Activated CD4-positive, alpha-beta memory T cell treated with anti-CD3 and anti-CD28 coated beads for 36 hours (primary cell): ENCODE measurements at regions of chr14 and their contacts with region 1.

Region 1: GRCh38 chr14:49862089-49862673 is 9.6 kb upstream of the NEMF start:
- DNase-seq: peak; percentile 93
- H3K4me3 Mint-ChIP-seq: no peak overlapping the region
- H3K27ac Mint-ChIP-seq: no peak overlapping the region
- H3K4me1 Mint-ChIP-seq: peaks cover 24% of the 10 kb centered on the region
- H3K27me3 Mint-ChIP-seq: peaks cover 2% of the 10 kb centered on the region

Region 2: DNA sequence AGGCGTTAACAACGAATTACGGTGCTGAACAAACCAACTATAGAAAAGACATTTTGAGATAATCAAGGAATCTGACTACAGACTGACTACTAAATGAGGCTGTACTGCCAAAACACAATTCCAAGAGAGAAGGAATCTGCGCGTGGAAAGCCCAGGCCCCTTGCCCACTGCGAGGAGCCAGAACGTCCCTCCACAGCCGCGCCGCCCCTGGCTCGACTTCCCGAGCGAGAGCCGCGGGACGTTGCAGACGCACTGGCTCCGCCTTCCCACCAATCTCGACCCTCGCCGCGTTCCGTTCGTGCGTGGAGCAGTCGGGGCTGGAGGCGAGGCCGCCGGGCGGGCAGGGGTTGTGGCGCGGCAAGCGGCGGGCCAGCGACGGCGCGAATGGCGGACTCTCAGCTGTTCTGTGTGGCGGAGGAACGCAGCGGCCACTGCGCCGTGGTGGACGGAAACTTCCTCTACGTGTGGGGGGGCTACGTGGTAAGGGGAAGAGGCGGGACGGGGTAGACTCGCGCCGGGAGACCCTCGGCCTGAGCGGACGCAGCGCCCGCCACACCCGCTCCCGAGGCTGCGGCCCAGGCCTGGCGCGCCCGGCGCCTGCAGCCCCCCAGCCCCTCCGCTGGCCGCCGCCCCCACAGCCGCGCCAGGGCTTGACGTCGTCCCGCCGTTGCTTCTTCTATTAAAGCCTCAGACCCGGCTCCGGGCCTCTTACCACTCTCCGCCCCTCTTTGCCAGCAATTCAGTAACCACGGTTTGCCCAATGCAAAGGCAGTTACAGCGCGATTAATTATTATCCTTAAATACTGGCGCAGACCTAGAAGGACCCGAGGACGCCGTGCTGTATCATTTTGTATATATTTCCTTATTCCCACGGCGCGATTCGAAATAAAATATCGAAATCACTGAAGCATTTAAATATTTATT is 169.1 kb before region 1 on chr14 and contains the start of gene KLHDC1:
- CTCF ChIA-PET with region 1: no interaction called
- POLR2A ChIA-PET with region 1: no interaction called
- intact Hi-C with region 1: loop called (anchors 5 kb)
- DNase-seq: peak; percentile 86
- H3K4me3 Mint-ChIP-seq: peak within 1 kb of the TSS; percentile 77
- H3K27ac Mint-ChIP-seq: peak within 1 kb of the TSS; percentile 40
- H3K4me1 Mint-ChIP-seq: peaks cover 27% of the 10 kb centered on the region
- H3K27me3 Mint-ChIP-seq: no peaks in the 10 kb centered on the region
- total RNA-seq, gene KLHDC1: 1.4 to 1.9 TPM

Region 3: DNA sequence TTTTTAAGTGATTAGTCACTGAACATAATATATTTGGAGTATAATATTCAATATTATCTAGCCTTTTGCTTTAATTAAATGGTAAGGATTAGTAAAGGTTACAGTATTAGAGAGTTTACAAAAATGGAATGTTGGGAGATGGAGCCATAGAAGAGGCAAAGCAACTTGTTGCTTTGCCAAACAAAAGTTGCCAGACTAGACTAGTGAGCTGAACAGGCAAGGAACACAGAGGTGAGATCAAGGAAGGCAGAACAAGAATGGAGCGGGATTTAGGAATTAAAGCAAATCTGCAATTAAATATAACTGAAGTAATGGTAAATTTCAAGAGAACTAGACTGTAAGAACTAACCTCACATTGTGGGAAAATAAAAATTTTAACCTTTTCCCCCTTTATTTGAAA is 35.8 kb after region 1 on chr14:
- CTCF ChIA-PET with region 1: interaction called, 14 read pairs
- POLR2A ChIA-PET with region 1: interaction called, 55 read pairs
- intact Hi-C with region 1: loop called (anchors 1 kb)
- DNase-seq: no peak
- H3K4me3 Mint-ChIP-seq: peak overlapping the region; percentile 75
- H3K27ac Mint-ChIP-seq: peak overlapping the region; percentile 93
- H3K4me1 Mint-ChIP-seq: peaks cover 29% of the 10 kb centered on the region
- H3K27me3 Mint-ChIP-seq: no peaks in the 10 kb centered on the region

Region 4: DNA sequence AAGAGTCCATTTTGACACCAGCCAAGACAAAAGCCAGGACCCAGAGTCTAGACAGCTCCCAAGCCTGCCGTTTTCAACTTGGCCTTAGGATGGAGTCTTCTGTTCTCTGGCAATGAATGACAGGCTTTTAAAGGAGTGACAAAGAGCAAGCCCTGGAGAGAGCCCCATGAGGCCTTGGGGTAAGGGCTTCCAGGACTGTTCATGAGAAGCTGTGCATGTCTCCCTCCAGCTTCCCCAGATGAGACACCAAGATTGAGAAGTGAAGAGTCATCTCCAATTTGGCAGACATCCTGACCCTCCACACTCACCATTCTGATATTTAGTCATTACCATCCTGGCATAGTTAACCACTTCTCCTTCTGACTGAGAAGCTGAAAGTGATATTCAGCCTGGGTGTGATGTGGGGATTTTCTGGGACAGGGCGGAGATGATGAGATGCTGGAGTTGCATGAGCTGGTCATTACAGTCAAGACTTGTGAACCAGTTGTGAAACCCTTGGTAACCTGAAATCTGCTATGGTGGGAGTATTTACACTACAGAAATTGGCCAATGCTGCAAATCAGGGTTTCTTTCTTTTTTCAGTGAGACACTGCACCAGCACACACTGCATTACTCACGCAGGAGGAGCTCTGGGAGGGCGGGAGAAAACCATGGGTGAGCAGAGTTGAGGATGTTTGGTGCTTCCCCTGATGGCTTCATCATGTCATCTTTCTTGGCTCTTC is 176.4 kb after region 1 on chr14:
- CTCF ChIA-PET with region 1: interaction called, 28 read pairs
- POLR2A ChIA-PET with region 1: interaction called, 43 read pairs
- intact Hi-C with region 1: loop called (anchors 1 kb)
- DNase-seq: peak; percentile 90
- H3K4me3 Mint-ChIP-seq: peak overlapping the region; percentile 74
- H3K27ac Mint-ChIP-seq: peak overlapping the region; percentile 99
- H3K4me1 Mint-ChIP-seq: peaks cover 64% of the 10 kb centered on the region
- H3K27me3 Mint-ChIP-seq: no peaks in the 10 kb centered on the region

Region 5: DNA sequence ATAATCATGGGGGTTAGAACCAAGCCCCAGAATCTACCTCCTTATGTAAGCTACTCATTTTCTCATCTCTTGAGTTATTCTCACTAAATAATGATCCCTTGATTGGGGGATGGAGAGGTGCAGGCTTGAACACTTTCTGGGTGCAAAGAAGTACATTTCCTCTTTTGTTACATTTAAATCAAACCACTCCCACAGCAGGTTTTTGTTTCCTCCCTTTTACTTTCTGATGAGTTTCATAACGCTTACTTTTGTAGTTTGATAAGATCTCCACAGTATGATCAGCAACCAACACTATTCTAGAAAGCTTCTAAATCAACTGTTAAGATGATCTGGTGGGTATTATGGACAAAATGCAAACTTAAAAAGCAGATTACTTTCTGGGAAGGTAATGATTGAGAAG is 233.7 kb after region 1 on chr14:
- CTCF ChIA-PET with region 1: interaction called, 28 read pairs
- POLR2A ChIA-PET with region 1: interaction called, 6 read pairs
- intact Hi-C with region 1: no loop called
- DNase-seq: no peak
- H3K4me3 Mint-ChIP-seq: peak overlapping the region; percentile 28
- H3K27ac Mint-ChIP-seq: peak overlapping the region; percentile 67
- H3K4me1 Mint-ChIP-seq: peaks cover 57% of the 10 kb centered on the region
- H3K27me3 Mint-ChIP-seq: no peaks in the 10 kb centered on the region

Region 6: DNA sequence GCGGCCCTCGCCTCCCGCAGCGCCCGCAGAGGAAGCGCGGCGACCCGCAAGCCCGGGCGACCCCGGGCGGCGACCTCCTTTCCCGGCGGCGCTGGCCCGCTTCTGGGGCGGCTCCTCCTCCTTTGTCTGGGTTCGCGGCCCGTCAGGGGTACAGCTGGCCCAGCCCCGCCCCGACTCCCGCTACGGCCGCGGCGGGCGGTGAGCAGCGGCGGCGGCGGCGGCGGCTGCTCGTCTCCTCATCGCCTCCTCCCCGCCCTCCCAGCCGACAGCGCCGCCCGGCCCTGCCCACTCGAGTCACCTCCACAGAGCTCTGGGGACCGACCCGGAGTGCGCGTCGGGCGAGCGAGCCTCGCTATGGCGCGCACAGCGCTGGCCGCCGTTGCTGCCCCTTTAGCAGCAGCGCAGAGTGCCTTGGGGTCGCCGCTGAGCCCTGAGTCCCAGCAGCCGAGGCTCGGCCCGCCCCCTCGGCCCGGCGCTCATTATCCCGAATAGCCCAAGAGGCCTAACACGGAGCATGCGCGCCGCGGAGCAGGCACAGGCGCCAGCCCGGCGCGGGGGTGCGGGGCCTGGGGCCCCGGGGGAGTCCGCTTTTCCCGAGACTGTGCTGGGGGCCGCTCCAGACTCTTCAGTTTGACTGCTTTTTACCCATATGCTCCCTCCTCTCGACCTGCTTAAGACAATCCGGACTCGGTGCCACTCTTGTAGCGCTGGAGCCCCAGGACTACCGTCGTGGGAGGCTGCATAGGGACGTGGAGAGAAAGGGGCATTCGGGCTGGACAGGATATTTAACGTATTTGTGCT is 369.5 kb after region 1 on chr14 and contains the start of gene SOS2:
- CTCF ChIA-PET with region 1: no interaction called
- POLR2A ChIA-PET with region 1: no interaction called
- intact Hi-C with region 1: loop called (anchors 2 kb)
- DNase-seq: peak; percentile 86
- H3K4me3 Mint-ChIP-seq: peak within 1 kb of the TSS; percentile 78
- H3K27ac Mint-ChIP-seq: peak within 1 kb of the TSS; percentile 85
- H3K4me1 Mint-ChIP-seq: peaks cover 40% of the 10 kb centered on the region
- H3K27me3 Mint-ChIP-seq: no peaks in the 10 kb centered on the region
- total RNA-seq, gene SOS2: 19.6 to 20.9 TPM